Activated B cell treated with CpG ODN at 0.5 μM for 24 hours (primary cell): ENCODE measurements at regions of chr5 and their contacts with region 1.

Region 1: DNA sequence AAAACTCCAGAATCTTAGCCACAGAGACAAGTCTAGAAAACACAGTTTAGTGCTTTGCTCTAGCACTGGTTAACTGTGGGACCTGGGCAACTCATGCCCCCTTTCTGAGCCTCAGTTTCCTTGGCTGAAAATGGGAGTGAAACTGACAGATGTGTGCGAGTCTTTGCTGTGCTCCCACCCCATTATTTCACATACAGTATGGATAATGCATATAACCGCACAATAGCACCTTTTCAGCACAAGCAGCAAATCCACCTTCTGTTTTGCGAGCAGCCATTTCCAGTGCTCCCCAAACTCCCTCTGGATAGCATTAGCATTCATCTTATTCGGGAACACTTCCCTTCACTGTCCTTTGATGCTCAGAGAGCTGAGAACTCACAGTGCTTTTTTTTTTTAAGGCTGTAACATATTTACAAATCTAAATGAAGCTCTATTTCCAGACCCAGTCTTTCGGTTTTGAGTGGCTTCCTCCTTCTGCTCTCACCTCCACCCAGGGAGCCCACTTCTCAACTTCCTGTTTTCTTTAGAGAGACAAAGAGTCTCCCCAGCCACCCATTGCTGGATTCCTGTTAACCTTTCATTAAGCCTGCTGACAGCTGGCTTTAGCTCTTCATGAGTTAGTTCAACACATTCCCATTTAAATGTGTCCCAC is 49.2 kb downstream of the TIMD4 start:
- DNase-seq: no peak
- ATAC-seq: peak; percentile 90
- H3K4me3 Mint-ChIP-seq: peak overlapping the region; percentile 71
- H3K27ac Mint-ChIP-seq: peak overlapping the region; percentile 82
- H3K4me1 Mint-ChIP-seq: peaks cover 31% of the 10 kb centered on the region
- H3K27me3 Mint-ChIP-seq: no peaks in the 10 kb centered on the region
- CTCF ChIP-seq: no peak

Region 2: GRCh38 chr5:156375895-156376495 is 537.9 kb before region 1 on chr5:
- CTCF ChIA-PET with region 1: no interaction called
- POLR2A ChIA-PET with region 1: no interaction called
- intact Hi-C with region 1: no loop called
- DNase-seq: no peak
- ATAC-seq: no peak
- H3K4me3 Mint-ChIP-seq: no peak overlapping the region
- H3K27ac Mint-ChIP-seq: no peak overlapping the region
- H3K4me1 Mint-ChIP-seq: peaks cover 10% of the 10 kb centered on the region
- H3K27me3 Mint-ChIP-seq: no peaks in the 10 kb centered on the region
- CTCF ChIP-seq: no peak

Region 3: DNA sequence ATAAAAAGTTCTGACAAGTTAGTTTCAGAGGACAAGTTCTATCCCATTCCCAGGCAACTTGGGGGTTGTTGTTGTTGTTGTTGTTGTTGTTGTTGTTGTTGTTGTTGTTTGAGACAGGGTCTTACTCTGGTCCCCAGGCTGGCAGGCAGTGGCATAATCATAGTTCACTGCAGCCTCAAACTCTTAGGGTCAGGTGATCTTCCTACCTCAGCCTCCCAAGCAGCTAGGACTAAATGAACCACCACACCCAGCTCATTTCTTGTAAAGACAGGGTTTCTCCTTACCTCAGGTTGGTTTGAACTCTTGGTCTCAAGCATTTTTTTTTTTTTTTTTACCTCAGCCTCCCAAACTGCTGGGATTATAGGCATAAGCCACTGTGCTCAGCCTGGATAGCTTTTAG is 48.4 kb before region 1 on chr5:
- CTCF ChIA-PET with region 1: no interaction called
- POLR2A ChIA-PET with region 1: no interaction called
- intact Hi-C with region 1: no loop called
- DNase-seq: no peak
- ATAC-seq: no peak
- H3K4me3 Mint-ChIP-seq: no peak overlapping the region
- H3K27ac Mint-ChIP-seq: no peak overlapping the region
- H3K4me1 Mint-ChIP-seq: no peaks in the 10 kb centered on the region
- H3K27me3 Mint-ChIP-seq: no peaks in the 10 kb centered on the region
- CTCF ChIP-seq: no peak

Region 4: GRCh38 chr5:156893517-156893916 is 20.3 kb before region 1 on chr5:
- CTCF ChIA-PET with region 1: no interaction called
- POLR2A ChIA-PET with region 1: no interaction called
- intact Hi-C with region 1: no loop called
- DNase-seq: no peak
- ATAC-seq: no peak
- H3K4me3 Mint-ChIP-seq: no peak overlapping the region
- H3K27ac Mint-ChIP-seq: no peak overlapping the region
- H3K4me1 Mint-ChIP-seq: peaks cover 12% of the 10 kb centered on the region
- H3K27me3 Mint-ChIP-seq: peaks cover 2% of the 10 kb centered on the region
- CTCF ChIP-seq: no peak

Region 5: DNA sequence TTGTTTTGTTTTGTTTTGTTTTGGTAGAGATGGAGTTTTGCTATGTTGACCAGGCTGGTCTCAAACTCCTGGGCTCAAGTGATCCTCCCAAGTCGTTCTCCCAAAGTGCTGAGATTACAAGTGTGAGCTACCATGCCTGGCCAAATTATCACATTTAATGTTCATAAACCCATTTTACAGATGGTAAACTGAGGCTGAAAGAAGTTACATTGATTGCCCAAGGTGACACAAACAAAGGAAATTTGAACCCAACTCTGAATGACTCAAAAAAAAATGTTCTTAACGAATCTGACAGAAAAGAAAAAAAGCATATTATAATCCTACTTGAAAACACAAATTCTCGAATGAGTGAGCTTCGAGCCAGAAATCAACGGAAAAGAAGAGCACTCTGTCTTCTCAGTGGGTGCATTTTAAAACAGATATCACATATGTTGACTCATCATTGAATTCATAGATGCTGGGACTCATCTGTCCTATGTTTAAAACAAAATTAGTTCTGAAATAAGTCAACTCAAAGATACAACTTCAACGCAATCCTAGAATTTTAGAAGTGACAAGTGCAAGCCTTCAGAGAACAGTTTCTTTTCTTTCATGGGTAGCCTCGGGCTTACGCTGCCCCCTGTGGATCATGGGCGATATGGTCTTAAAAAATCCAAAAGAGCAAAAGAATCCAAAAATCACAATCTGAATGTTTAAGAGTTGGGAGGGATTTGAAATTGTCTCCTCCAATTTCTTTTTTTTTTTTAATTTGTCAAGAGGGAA is 20.8 kb after region 1 on chr5:
- CTCF ChIA-PET with region 1: no interaction called
- POLR2A ChIA-PET with region 1: no interaction called
- intact Hi-C with region 1: loop called (anchors 2 kb)
- DNase-seq: no peak
- ATAC-seq: no peak
- H3K4me3 Mint-ChIP-seq: no peak overlapping the region
- H3K27ac Mint-ChIP-seq: no peak overlapping the region
- H3K4me1 Mint-ChIP-seq: peaks cover 7% of the 10 kb centered on the region
- H3K27me3 Mint-ChIP-seq: no peaks in the 10 kb centered on the region
- CTCF ChIP-seq: no peak

Region 6: DNA sequence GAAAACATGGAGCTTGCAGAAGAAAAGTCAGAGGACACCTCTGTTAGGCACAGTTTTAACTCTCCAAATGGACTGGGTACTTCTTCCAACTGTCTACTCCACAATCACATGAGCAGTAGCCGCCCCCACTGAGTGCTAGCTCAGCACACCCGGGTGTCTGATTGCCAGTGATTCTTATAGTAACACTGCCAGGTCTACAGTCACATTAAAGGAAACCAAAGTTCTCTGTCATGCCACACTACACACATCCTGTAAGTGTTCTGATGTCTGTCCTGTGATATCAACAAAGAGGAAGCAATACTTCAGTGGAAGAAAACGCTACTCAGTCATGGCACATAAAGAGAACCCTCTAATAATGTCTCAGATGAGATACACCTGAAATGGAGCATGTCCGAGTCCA is 195.1 kb after region 1 on chr5 and contains the start of gene HAVCR2:
- CTCF ChIA-PET with region 1: no interaction called
- POLR2A ChIA-PET with region 1: no interaction called
- intact Hi-C with region 1: loop called (anchors 10 kb)
- DNase-seq: no peak
- ATAC-seq: peak; percentile 84
- H3K4me3 Mint-ChIP-seq: peak within 1 kb of the TSS; percentile 72
- H3K27ac Mint-ChIP-seq: peak within 1 kb of the TSS; percentile 89
- H3K4me1 Mint-ChIP-seq: peaks cover 35% of the 10 kb centered on the region
- H3K27me3 Mint-ChIP-seq: no peaks in the 10 kb centered on the region
- CTCF ChIP-seq: no peak
- total RNA-seq, gene HAVCR2: 0.64 and 0.84 TPM in 2 replicates